CD4-positive, alpha-beta T cell (primary cell): ENCODE measurements at regions of chr19 and their contacts with region 1.

Region 1: GRCh38 chr19:18281082-18282020 is at the start of gene JUND:
- DNase-seq: peak; percentile 92 to 100 (median 97)
- ATAC-seq: peak; percentile 63
- H3K4me3 ChIP-seq: peak within 1 kb of the TSS; percentile 99
- H3K4me3 Mint-ChIP-seq: peak within 1 kb of the TSS; percentile 99
- H3K27ac ChIP-seq: peak within 1 kb of the TSS; percentile 99
- H3K27ac Mint-ChIP-seq: peak within 1 kb of the TSS; percentile 100
- H3K4me1 ChIP-seq: peaks cover 65% of the 10 kb centered on the region
- H3K4me1 Mint-ChIP-seq: peaks cover 58% of the 10 kb centered on the region
- H3K27me3 ChIP-seq: no peaks in the 10 kb centered on the region
- H3K27me3 Mint-ChIP-seq: peaks cover 9% of the 10 kb centered on the region
- CTCF ChIP-seq: no peak
- total RNA-seq, gene JUND: 1,827 to 1,976 TPM

Region 2: DNA sequence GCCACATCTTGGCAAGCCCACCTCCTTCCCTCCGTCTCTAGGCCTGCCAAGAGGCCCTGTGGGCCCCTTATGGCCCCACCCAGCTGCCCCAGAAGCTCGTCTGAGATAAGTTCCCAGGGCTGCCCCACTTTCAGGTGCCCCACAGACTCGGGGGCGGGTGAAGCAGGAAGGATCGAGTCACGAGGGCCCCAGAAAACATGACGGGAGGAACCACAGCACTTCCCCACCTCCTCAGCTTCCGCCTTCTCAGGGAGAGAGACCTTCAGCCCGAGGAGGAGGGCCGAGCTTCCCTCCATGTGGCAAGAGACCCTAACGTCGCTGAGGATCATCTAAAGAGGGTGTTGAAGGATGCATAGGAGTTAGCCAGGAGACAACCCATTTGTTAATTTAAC is 190.1 kb before region 1 on chr19:
- CTCF ChIA-PET with region 1: interaction called, 3 read pairs
- POLR2A ChIA-PET with region 1: interaction called, 19 read pairs
- intact Hi-C with region 1: no loop called
- DNase-seq: peak; percentile 55 to 94 (median 74)
- ATAC-seq: peak; percentile 69
- H3K4me3 ChIP-seq: no peak overlapping the region
- H3K4me3 Mint-ChIP-seq: peak overlapping the region; percentile 82
- H3K27ac ChIP-seq: peak overlapping the region; percentile 74 to 93
- H3K27ac Mint-ChIP-seq: peak overlapping the region; percentile 98
- H3K4me1 ChIP-seq: peaks cover 67% of the 10 kb centered on the region
- H3K4me1 Mint-ChIP-seq: peaks cover 58% of the 10 kb centered on the region
- H3K27me3 ChIP-seq: no peaks in the 10 kb centered on the region
- H3K27me3 Mint-ChIP-seq: no peaks in the 10 kb centered on the region
- CTCF ChIP-seq: no peak

Region 3: DNA sequence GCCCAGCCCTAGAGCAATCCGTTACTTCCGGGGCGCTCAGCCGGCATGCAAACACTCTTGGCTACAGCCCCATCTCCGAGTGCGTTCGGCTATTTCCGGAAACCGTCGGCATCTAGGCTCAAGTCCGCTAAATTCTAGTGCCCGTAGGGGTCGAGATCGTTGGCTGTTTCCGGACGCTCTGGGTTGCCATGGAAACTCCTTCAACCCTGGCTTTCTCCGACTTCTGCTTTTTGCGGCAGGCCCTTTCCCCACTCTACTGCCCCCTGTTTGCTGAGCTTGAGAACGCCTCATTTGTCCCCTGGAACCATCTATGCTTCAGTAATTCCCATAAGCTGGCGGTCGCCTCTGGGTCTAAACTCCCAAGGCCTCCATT is 128.9 kb before region 1 on chr19:
- CTCF ChIA-PET with region 1: interaction called, 5 read pairs
- POLR2A ChIA-PET with region 1: interaction called, 27 read pairs
- intact Hi-C with region 1: no loop called
- DNase-seq: peak; percentile 94 to 99 (median 98)
- ATAC-seq: peak; percentile 67
- H3K4me3 ChIP-seq: peak overlapping the region; percentile 78
- H3K4me3 Mint-ChIP-seq: peak overlapping the region; percentile 86
- H3K27ac ChIP-seq: peak overlapping the region; percentile 64 to 88
- H3K27ac Mint-ChIP-seq: peak overlapping the region; percentile 80
- H3K4me1 ChIP-seq: peaks cover 36% of the 10 kb centered on the region
- H3K4me1 Mint-ChIP-seq: peaks cover 23% of the 10 kb centered on the region
- H3K27me3 ChIP-seq: no peaks in the 10 kb centered on the region
- H3K27me3 Mint-ChIP-seq: no peaks in the 10 kb centered on the region
- CTCF ChIP-seq: peak; percentile 58

Region 4: DNA sequence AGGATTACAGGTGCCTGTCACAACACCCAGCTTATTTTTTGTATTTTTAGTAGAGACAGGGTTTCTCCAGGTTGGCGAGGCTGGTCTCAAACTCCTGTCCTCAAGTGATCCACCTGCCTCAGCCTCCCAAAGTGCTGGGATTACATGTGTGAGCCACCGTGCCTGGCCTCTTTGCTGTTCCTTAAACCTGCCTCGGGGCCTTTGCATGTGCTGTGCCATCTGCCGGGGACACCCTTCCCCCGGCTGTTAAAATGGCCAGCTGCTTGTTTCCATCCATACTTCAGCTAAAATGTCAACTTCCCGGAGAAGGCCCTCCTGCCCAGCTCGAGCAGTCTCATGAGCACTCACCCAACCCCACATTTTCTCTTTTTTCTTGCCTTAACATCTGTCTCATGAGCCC is 36.1 kb before region 1 on chr19:
- CTCF ChIA-PET with region 1: no interaction called
- POLR2A ChIA-PET with region 1: no interaction called
- intact Hi-C with region 1: no loop called
- DNase-seq: no peak
- ATAC-seq: no peak
- H3K4me3 ChIP-seq: no peak overlapping the region
- H3K4me3 Mint-ChIP-seq: no peak overlapping the region
- H3K27ac ChIP-seq: no peak overlapping the region
- H3K27ac Mint-ChIP-seq: no peak overlapping the region
- H3K4me1 ChIP-seq: no peaks in the 10 kb centered on the region
- H3K4me1 Mint-ChIP-seq: no peaks in the 10 kb centered on the region
- H3K27me3 ChIP-seq: no peaks in the 10 kb centered on the region
- H3K27me3 Mint-ChIP-seq: peaks cover 5% of the 10 kb centered on the region
- CTCF ChIP-seq: no peak

Region 5: GRCh38 chr19:18291590-18292461 is 10.5 kb after region 1 on chr19:
- CTCF ChIA-PET with region 1: interaction called, 29 read pairs
- POLR2A ChIA-PET with region 1: interaction called, 327 read pairs
- intact Hi-C with region 1: loop called in 1 of 2 experiments (anchors 1 kb)
- DNase-seq: peak; percentile 51 to 93 (median 69)
- ATAC-seq: peak; percentile 41
- H3K4me3 ChIP-seq: peak overlapping the region; percentile 91
- H3K4me3 Mint-ChIP-seq: peak overlapping the region; percentile 89
- H3K27ac ChIP-seq: peak overlapping the region; percentile 96 to 100
- H3K27ac Mint-ChIP-seq: peak overlapping the region; percentile 91
- H3K4me1 ChIP-seq: peaks cover 67% of the 10 kb centered on the region
- H3K4me1 Mint-ChIP-seq: peaks cover 61% of the 10 kb centered on the region
- H3K27me3 ChIP-seq: no peaks in the 10 kb centered on the region
- H3K27me3 Mint-ChIP-seq: no peaks in the 10 kb centered on the region
- CTCF ChIP-seq: no peak

Region 6: GRCh38 chr19:18322759-18323460 is 41.6 kb after region 1 on chr19 and contains the start of gene LSM4:
- CTCF ChIA-PET with region 1: interaction called, 340 read pairs
- POLR2A ChIA-PET with region 1: interaction called, 761 read pairs
- intact Hi-C with region 1: loop called (anchors 1 kb)
- DNase-seq: peak; percentile 99 to 100 (median 100)
- ATAC-seq: peak; percentile 91
- H3K4me3 ChIP-seq: peak within 1 kb of the TSS; percentile 87
- H3K4me3 Mint-ChIP-seq: peak within 1 kb of the TSS; percentile 73
- H3K27ac ChIP-seq: peak within 1 kb of the TSS; percentile 83 to 86
- H3K27ac Mint-ChIP-seq: peak within 1 kb of the TSS; percentile 90
- H3K4me1 ChIP-seq: peaks cover 63% of the 10 kb centered on the region
- H3K4me1 Mint-ChIP-seq: peaks cover 54% of the 10 kb centered on the region
- H3K27me3 ChIP-seq: no peaks in the 10 kb centered on the region
- H3K27me3 Mint-ChIP-seq: no peaks in the 10 kb centered on the region
- CTCF ChIP-seq: peak; percentile 73
- total RNA-seq, gene LSM4: 40.2 to 47.4 TPM

Region 7: DNA sequence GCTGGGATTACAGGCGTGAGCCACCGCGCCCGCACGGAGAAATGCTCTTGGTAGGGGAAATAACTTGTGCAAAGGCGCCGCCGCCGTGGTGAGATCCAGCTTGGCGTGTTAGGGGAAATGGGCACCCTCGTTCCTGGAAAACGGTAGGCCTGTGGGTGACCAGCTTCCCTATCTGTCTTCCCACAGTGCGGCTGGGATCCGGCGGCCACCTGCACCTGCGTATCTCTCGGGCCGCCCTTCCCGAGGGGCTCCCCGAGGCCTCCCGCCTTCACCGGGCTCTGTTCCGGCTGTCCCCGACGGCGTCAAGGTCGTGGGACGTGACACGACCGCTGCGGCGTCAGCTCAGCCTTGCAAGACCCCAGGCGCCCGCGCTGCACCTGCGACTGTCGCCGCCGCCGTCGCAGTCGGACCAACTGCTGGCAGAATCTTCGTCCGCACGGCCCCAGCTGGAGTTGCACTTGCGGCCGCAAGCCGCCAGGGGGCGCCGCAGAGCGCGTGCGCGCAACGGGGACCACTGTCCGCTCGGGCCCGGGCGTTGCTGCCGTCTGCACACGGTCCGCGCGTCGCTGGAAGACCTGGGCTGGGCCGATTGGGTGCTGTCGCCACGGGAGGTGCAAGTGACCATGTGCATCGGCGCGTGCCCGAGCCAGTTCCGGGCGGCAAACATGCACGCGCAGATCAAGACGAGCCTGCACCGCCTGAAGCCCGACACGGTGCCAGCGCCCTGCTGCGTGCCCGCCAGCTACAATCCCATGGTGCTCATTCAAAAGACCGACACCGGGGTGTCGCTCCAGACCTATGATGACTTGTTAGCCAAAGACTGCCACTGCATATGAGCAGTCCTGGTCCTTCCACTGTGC is 107.0 kb after region 1 on chr19:
- CTCF ChIA-PET with region 1: interaction called, 13 read pairs
- POLR2A ChIA-PET with region 1: interaction called, 13 read pairs
- intact Hi-C with region 1: no loop called
- DNase-seq: peak; percentile 51 to 89 (median 72)
- ATAC-seq: peak; percentile 85
- H3K4me3 ChIP-seq: peak overlapping the region; percentile 47
- H3K4me3 Mint-ChIP-seq: peak overlapping the region; percentile 72
- H3K27ac ChIP-seq: no peak overlapping the region
- H3K27ac Mint-ChIP-seq: no peak overlapping the region
- H3K4me1 ChIP-seq: peaks cover 14% of the 10 kb centered on the region
- H3K4me1 Mint-ChIP-seq: peaks cover 12% of the 10 kb centered on the region
- H3K27me3 ChIP-seq: peaks cover 42 to 43% of the 10 kb centered on the region in 2 experiments
- H3K27me3 Mint-ChIP-seq: peaks cover 66% of the 10 kb centered on the region
- CTCF ChIP-seq: peak; percentile 100